ENCODE measurements at regions of chr5 and their contacts with region 1.

Region 1: GRCh38 chr5:76908166-76908565 is 44.7 kb upstream of the CRHBP start:
- DNase-seq: no peak

Region 2: GRCh38 chr5:76874088-76874581 is 34.0 kb before region 1 on chr5:
- intact Hi-C with region 1: loop called (anchors 5 kb)
- DNase-seq: no peak

Measured in cardiac septum (tissue), 1 donor.